ENCODE measurements at regions of chr1 and their contacts with region 1.

Region 1: DNA sequence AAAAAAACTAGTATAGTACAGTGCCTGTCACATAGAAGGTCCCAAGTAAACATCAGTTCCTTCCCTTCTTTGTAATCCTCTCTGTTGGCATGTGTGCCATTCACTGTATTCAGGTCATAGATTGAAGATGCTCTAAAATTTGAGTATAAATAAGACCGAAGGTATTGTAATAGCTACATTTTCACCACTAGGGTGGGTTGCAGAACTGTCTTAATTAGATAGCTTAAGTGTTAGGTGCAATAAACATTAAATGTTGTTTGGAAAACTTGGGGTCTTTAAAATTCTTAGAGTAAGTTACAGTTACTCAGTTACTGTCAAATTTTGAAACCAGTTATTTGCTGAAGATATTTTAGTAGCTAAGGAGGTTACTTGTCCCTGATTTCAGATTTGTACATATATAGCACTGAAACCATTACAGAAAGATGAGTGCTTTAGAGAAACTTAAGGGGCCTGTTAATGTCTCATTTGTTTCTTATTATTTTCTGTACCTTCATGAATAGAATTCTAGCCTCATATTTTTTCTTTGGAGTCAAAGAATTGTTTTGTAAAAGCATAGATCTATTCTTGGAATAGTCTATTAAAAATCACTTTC is 24.3 kb downstream of the PER3 start:
- DNase-seq: no peak
- H3K4me3 ChIP-seq: no peak overlapping the region
- H3K27ac ChIP-seq: no peak overlapping the region
- H3K4me1 ChIP-seq: no peaks in the 10 kb centered on the region
- H3K27me3 ChIP-seq: no peaks in the 10 kb centered on the region
- CTCF ChIP-seq: peak; percentile 68

Region 2: GRCh38 chr1:7795406-7795805 is 12.9 kb before region 1 on chr1:
- CTCF ChIA-PET with region 1: no interaction called
- POLR2A ChIA-PET with region 1: interaction called, 11 read pairs
- intact Hi-C with region 1: no loop called
- DNase-seq: no peak
- H3K4me3 ChIP-seq: no peak overlapping the region
- H3K27ac ChIP-seq: no peak overlapping the region
- H3K4me1 ChIP-seq: no peaks in the 10 kb centered on the region
- H3K27me3 ChIP-seq: no peaks in the 10 kb centered on the region
- CTCF ChIP-seq: no peak

Region 3: DNA sequence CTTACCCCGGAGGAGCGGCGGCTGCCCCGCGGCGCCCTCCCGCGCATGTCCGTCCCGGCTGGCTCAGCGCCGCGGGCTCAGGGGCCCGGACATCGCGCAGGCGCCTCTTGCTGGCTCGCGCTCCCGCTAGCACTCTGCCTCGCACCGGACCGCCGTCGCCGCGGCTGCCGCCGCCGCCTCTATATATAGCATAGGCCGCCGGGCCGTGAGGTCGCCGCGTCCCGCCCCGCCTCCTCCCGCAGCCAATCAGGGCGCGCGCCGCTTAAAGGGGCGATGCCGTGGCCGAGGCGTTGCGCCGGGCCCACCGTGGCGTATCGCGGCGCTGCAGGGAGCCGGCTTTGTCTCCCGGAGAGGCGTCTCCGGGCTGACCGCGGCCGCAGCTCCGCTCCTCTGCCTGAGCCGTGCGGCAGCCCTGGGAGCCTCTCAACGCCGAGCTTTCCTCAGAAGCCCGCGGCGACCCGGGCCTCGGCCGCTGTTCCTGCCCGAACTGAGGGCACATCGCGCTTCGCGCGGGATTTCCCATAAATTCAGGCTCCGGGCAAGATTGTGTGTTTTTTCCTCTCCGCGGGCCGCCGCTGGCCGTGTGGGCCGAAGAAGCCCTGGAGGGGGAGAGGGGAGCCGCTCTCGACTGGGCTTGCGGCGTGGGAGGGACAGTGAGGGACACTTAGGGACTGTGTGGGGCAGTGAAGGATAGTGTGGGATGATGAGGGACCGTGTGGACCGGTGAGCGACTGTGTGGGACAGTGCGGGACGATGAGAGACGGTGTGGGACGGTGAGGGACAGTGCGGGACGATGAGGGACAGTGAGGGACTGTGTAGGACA is 218.0 kb after region 1 on chr1 and contains the start of gene ERRFI1:
- CTCF ChIA-PET with region 1: no interaction called
- POLR2A ChIA-PET with region 1: no interaction called
- intact Hi-C with region 1: no loop called
- DNase-seq: peak; percentile 74 to 95
- H3K4me3 ChIP-seq: peak within 1 kb of the TSS; percentile 91
- H3K27ac ChIP-seq: peak within 1 kb of the TSS; percentile 98
- H3K4me1 ChIP-seq: peaks cover 26% of the 10 kb centered on the region
- H3K27me3 ChIP-seq: no peaks in the 10 kb centered on the region
- CTCF ChIP-seq: no peak
- total RNA-seq, gene ERRFI1: 44.9 and 47.8 TPM in 2 replicates

Region 4: GRCh38 chr1:8090241-8090702 is 281.9 kb after region 1 on chr1:
- CTCF ChIA-PET with region 1: no interaction called
- POLR2A ChIA-PET with region 1: interaction called, 19 read pairs
- intact Hi-C with region 1: no loop called
- DNase-seq: peak in 1 of 2 experiments; percentile 67
- H3K4me3 ChIP-seq: no peak overlapping the region
- H3K27ac ChIP-seq: peak overlapping the region; percentile 96
- H3K4me1 ChIP-seq: peaks cover 53% of the 10 kb centered on the region
- H3K27me3 ChIP-seq: no peaks in the 10 kb centered on the region
- CTCF ChIP-seq: no peak